ENCODE measurements at regions of chr13 and their contacts with region 1.

Region 1: DNA sequence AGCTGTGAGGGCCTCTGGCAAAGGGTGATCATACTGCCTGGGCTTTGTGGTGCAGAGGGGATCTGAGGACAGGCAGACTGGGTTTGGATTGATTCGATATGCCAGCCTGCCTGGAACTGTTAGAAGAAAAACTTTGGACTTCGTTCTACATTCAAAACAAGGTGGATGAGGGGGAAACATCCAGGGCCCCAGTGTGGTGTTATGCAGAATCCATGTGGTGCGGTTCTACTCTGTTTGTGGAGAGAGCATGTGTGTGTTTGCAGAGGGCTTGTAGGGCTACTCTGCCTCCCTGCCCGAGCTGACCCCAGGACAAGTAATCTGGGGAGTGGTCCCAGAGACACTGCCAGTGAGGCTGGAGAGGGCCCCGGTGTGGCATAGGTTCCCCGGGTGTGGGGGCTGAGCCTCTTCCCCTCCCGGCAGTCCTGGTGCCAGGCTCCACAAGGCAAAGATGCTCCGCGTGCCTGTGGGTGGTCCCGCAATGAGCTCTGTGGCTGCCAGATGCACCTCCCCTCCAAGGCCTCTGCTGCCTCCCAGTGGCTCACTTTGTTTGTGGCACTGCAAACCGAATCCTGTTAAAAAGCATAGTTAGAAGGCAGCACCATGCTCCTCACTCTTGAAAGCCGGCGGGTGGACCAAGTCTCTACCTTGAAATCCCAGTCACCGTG is 22.3 kb upstream of the TFDP1 start:
- DNase-seq: peak; percentile 73
- H3K4me3 ChIP-seq: no peak overlapping the region
- H3K27ac ChIP-seq: no peak overlapping the region
- H3K4me1 ChIP-seq: no peaks in the 10 kb centered on the region
- H3K27me3 ChIP-seq: no peaks in the 10 kb centered on the region
- CTCF ChIP-seq: peak; percentile 78 to 91
- POLR2A ChIP-seq: no peak

Region 2: DNA sequence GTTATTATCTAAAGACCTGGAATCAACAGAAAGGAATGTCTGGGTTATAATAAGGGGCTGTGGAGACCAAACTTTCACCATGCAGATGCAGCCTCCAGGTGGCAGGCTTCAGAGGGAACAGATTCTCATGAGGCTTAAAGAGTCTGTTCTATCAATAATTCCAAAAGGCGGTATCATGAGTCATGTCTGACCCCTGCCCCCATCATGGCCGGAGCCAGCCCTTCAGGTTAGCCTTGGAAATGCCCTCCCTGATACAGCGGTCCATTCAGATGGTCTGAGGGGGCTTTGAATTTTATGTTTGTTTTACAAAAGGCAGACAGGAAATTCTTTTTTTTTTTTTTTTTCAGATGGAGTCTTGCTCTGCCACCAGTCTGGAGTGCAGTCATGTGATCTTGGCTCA is 286.8 kb before region 1 on chr13:
- CTCF ChIA-PET with region 1: interaction called, 10 read pairs
- POLR2A ChIA-PET with region 1: no interaction called
- dilution Hi-C with region 1: no loop called
- intact Hi-C with region 1: loop called (anchors 10 kb)
- DNase-seq: peak; percentile 74
- H3K4me3 ChIP-seq: no peak overlapping the region
- H3K27ac ChIP-seq: no peak overlapping the region
- H3K4me1 ChIP-seq: no peaks in the 10 kb centered on the region
- H3K27me3 ChIP-seq: no peaks in the 10 kb centered on the region
- CTCF ChIP-seq: peak; percentile 49 to 66
- POLR2A ChIP-seq: no peak

Region 3: GRCh38 chr13:113458253-113459065 is 103.8 kb before region 1 on chr13:
- CTCF ChIA-PET with region 1: interaction called, 70 read pairs
- POLR2A ChIA-PET with region 1: no interaction called
- dilution Hi-C with region 1: no loop called
- intact Hi-C with region 1: loop called (anchors 1 kb)
- DNase-seq: no peak
- H3K4me3 ChIP-seq: no peak overlapping the region
- H3K27ac ChIP-seq: no peak overlapping the region
- H3K4me1 ChIP-seq: no peaks in the 10 kb centered on the region
- H3K27me3 ChIP-seq: no peaks in the 10 kb centered on the region
- CTCF ChIP-seq: peak; percentile 36 to 64
- POLR2A ChIP-seq: no peak

Region 4: DNA sequence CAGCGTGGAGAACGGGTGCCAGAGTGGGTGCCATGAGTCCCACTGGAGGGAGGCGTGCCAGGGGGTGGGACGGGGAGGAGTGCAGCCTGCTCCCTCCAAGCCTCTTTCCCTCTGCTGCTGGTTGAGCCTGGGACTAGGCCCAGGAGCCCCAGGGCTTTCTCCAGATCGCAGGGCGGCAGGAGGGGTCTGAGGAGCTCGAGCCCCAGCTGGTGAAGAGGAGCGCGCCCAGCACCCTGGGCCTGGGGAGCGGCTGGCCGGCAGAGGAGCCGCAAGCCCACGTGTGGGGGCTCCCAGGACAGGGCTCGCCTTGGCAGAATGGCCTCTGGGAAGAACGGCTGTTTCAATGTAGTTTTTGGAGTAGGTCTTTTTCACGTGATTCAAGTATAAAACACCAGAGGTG is 59.5 kb before region 1 on chr13:
- CTCF ChIA-PET with region 1: interaction called, 11 read pairs
- POLR2A ChIA-PET with region 1: no interaction called
- dilution Hi-C with region 1: no loop called
- intact Hi-C with region 1: no loop called
- DNase-seq: no peak
- H3K4me3 ChIP-seq: no peak overlapping the region
- H3K27ac ChIP-seq: no peak overlapping the region
- H3K4me1 ChIP-seq: no peaks in the 10 kb centered on the region
- H3K27me3 ChIP-seq: no peaks in the 10 kb centered on the region
- CTCF ChIP-seq: no peak
- POLR2A ChIP-seq: no peak

Region 5: GRCh38 chr13:113545455-113545930 is 16.7 kb before region 1 on chr13:
- CTCF ChIA-PET with region 1: interaction called, 45 read pairs
- POLR2A ChIA-PET with region 1: no interaction called
- dilution Hi-C with region 1: no loop called
- intact Hi-C with region 1: no loop called
- DNase-seq: peak; percentile 52
- H3K4me3 ChIP-seq: no peak overlapping the region
- H3K27ac ChIP-seq: peak overlapping the region; percentile 78
- H3K4me1 ChIP-seq: peaks cover 30% of the 10 kb centered on the region
- H3K27me3 ChIP-seq: no peaks in the 10 kb centered on the region
- CTCF ChIP-seq: no peak
- POLR2A ChIP-seq: no peak

Measured in endothelial cell of umbilical vein (primary cell).